CD4-positive, alpha-beta T cell (primary cell): ENCODE measurements at regions of chr19 and their contacts with region 1.

Region 1: DNA sequence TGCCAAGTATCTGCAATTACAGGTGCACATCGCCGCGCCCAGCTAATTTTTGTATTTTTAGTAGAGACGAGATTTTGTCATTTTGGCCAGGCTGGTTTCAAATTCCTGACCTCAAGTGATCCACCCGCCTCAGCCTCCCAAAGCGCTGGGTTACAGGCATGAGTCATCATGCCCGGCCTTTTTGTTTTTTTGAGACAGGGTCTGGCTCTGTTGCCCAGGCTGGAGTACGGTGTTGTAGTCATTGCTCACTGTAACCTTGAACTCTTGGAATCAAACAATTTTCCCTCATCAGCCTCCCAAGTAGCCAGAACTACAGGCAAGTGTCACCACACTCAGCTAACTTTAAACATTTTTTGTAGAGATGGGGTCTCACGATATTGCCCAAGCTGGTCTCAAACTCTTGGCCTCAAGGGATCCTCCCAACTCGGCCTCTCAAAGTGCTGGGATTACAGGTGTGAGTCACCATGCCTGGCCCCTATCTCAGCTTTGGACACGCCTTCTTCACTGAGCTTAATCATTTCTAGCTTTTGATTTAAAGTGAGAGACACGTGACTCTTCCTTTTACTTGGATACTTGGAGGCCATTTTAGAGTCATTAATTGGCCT is 4.0 kb upstream of the IRGC start:
- DNase-seq: no peak
- ATAC-seq: no peak
- H3K4me3 ChIP-seq: no peak overlapping the region
- H3K4me3 Mint-ChIP-seq: no peak overlapping the region
- H3K27ac ChIP-seq: no peak overlapping the region
- H3K27ac Mint-ChIP-seq: no peak overlapping the region
- H3K4me1 ChIP-seq: no peaks in the 10 kb centered on the region
- H3K4me1 Mint-ChIP-seq: no peaks in the 10 kb centered on the region
- H3K27me3 ChIP-seq: peaks cover 0 to 4% of the 10 kb centered on the region in 2 experiments
- H3K27me3 Mint-ChIP-seq: peaks cover 17% of the 10 kb centered on the region
- CTCF ChIP-seq: no peak

Region 2: DNA sequence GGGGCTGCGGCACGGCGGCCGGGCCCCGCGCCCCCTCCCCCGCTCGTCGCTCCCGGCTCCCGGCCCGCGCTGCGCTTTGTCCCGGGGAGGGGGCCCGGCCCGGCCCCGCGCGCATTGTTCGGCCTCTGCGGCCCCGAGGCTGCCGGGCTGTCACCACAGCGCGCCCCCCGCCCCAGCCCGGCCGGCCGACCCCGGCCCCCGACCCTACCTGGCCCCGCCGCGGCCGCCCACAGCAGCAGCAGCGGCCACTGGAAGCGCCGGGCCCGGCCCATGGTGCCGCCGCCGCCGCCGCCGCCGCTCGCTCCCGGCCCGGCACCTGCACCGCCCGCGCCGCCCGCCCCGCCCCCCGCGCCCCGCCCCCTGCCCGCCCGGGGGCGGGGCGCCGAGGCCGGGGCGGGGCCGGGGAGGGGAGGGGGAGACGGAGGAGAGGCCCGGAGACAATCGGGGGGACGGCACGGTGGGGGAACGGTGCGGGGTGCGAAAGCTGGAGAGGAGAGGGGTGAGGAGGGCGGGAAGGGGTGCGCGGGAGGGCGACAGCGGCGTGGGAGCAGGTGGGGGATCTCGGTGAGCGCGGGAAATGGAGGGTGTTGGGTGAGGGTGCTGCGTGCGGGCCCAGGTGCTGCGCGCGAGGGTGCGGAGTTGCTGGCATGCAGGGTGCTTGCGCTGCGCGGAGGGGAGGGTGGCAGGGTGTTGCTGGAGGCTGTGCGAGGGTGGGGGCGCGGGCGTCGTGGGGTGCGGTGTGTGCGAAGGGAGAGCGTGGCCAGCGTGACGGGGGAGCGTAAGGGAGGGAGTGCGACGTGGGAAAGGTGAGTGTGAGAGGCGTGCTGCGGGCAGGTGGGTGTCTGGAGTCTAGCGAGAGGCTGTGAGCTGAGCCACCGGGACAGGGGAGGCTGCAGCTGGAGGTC is 72.1 kb before region 1 on chr19 and contains the start of gene CADM4:
- CTCF ChIA-PET with region 1: no interaction called
- POLR2A ChIA-PET with region 1: no interaction called
- intact Hi-C with region 1: loop called in 1 of 2 experiments (anchors 5 kb)
- DNase-seq: peak; percentile 23 to 84 (median 46)
- ATAC-seq: peak; percentile 86
- H3K4me3 ChIP-seq: peak within 1 kb of the TSS; percentile 57
- H3K4me3 Mint-ChIP-seq: peak within 1 kb of the TSS; percentile 85
- H3K27ac ChIP-seq: no peak within 1 kb of the TSS
- H3K27ac Mint-ChIP-seq: no peak within 1 kb of the TSS
- H3K4me1 ChIP-seq: peaks cover 18% of the 10 kb centered on the region
- H3K4me1 Mint-ChIP-seq: peaks cover 13% of the 10 kb centered on the region
- H3K27me3 ChIP-seq: peaks cover 6 to 26% of the 10 kb centered on the region in 2 experiments
- H3K27me3 Mint-ChIP-seq: peaks cover 33% of the 10 kb centered on the region
- CTCF ChIP-seq: no peak
- total RNA-seq, gene CADM4: 0.28 to 0.36 TPM